Kidney (tissue), 22 donors: ENCODE measurements at regions of chr7 and their contacts with region 1.

Region 1: GRCh38 chr7:81469869-81470723 is 299.8 kb downstream of the HGF start:
- DNase-seq: peak; percentile 64 to 80 (median 68)
- H3K4me3 ChIP-seq: no peak overlapping the region
- H3K27ac ChIP-seq: no peak overlapping the region
- H3K4me1 ChIP-seq: no peaks in the 10 kb centered on the region
- H3K27me3 ChIP-seq: no peaks in the 10 kb centered on the region
- CTCF ChIP-seq: peak; percentile 78

Region 2: GRCh38 chr7:80699721-80700256 is 770.3 kb before region 1 on chr7:
- intact Hi-C with region 1: loop called (anchors 5 kb)
- DNase-seq: peak in 1 of 5 donors; percentile 8
- H3K4me3 ChIP-seq: no peak overlapping the region
- H3K27ac ChIP-seq: no peak overlapping the region
- H3K4me1 ChIP-seq: no peaks in the 10 kb centered on the region
- H3K27me3 ChIP-seq: no peaks in the 10 kb centered on the region
- CTCF ChIP-seq: no peak